ENCODE measurements at regions of chr10 and their contacts with region 1.

Region 1: DNA sequence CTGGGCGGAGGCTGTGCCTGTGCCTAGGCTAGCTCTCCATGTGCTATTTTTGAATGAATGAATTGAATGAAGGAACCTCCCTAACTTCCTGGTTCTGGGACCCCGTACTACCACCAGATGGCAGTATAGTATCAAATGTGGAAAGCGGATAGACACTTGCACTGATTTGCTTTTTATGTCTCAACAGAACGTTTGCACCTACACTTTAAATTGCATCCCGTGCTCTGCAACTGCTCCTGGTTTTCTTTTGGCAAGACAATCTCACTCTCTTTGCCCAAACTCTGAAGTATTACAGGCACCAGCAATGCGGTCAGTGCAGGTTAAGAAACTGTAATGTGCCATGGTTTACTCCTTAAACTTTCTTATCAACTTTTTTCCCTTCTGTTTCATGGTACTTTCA is 6.5 kb downstream of the FZD8 start:
- DNase-seq: peak; percentile 56
- H3K4me3 Mint-ChIP-seq: no peak overlapping the region
- H3K27ac Mint-ChIP-seq: no peak overlapping the region
- H3K4me1 Mint-ChIP-seq: peaks cover 8% of the 10 kb centered on the region
- H3K27me3 Mint-ChIP-seq: peaks cover 56% of the 10 kb centered on the region

Region 2: GRCh38 chr10:35574924-35575352 is 60.6 kb before region 1 on chr10:
- CTCF ChIA-PET with region 1: no interaction called
- DNase-seq: no peak
- H3K4me3 Mint-ChIP-seq: no peak overlapping the region
- H3K27ac Mint-ChIP-seq: no peak overlapping the region
- H3K4me1 Mint-ChIP-seq: no peaks in the 10 kb centered on the region
- H3K27me3 Mint-ChIP-seq: no peaks in the 10 kb centered on the region

Region 3: DNA sequence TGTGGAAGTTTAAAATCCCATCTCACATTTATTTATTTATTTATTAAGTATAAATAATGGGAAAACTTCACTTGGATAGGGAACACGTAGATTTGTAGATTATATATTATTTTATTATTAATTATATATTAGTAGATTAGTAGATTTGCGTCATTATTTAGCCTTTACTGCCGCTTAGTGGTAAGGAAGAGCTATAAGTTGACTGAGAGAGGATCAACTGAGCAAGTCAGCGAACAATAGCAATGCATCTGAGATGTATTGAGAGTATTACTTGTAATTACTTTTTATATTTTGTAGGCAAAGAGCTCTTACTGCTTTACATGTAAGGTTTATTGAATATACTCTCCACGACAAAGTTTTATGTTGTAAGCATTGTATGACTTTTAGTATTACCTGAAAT is 1245.3 kb after region 1 on chr10:
- CTCF ChIA-PET with region 1: interaction called, 11 read pairs
- DNase-seq: no peak
- H3K4me3 Mint-ChIP-seq: no peak overlapping the region
- H3K27ac Mint-ChIP-seq: no peak overlapping the region
- H3K4me1 Mint-ChIP-seq: no peaks in the 10 kb centered on the region
- H3K27me3 Mint-ChIP-seq: no peaks in the 10 kb centered on the region

Measured in activated naive CD4-positive, alpha-beta T cell treated with anti-CD3 and anti-CD28 coated beads, Interleukin-2, amount 10 ng/mL, durations not matched to agents 7 days and 5 days (primary cell).